A549 (cell line): ENCODE measurements at regions of chr2 and their contacts with region 1.

Region 1: DNA sequence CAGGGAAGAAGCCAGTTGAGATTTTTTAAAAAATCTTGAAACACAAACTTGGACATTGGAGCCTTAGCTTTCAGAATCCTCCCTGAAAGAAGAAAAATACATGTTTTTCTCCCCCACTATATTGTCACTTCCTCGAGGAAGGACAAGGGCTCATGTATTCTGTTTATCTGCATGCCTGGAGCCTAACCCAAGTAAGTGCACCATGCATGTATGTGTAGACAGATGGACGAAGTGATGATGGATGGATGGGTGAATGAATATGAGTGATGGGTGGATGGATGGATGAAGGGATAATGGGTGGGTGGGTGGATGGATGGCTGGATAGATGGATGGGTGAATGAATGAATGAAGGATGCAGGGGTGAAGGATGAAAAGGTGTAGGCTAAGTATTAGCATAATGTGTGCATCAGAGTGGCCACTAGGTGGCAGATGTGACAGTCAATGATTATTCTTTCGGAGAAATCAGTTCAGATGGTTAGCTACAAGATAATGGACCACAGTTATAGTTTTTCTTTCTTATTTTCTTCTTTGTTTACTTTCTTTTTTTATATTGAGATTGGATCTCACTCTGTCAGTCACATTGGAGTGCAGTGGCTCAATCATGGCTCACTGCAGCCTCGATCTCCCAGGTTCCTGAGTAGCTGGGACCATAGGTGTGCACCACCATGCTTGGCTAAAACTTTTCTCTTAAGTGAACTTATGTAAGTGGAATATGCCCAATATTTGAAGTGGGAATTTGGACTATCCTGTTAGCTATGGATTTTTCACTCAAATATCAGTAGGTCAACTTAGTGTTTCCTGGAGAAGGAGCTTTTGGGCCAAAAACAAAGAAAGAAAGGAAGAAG is 18.5 kb upstream of the CCDC93 start:
- DNase-seq: peak; percentile 29 to 34
- ATAC-seq: peak; percentile 85 to 92
- H3K4me3 ChIP-seq: no peak overlapping the region
- H3K27ac ChIP-seq: no peak overlapping the region
- H3K4me1 ChIP-seq: no peaks in the 10 kb centered on the region
- CTCF ChIP-seq: peak; percentile 71
- EP300 ChIP-seq: no peak
- POLR2A ChIP-seq: no peak
- RAD21 ChIP-seq: peak; percentile 51

Region 2: GRCh38 chr2:117943013-117943672 is 89.2 kb before region 1 on chr2:
- CTCF ChIA-PET with region 1: no interaction called
- POLR2A ChIA-PET with region 1: no interaction called
- DNase-seq: no peak
- ATAC-seq: no peak
- H3K4me3 ChIP-seq: no peak overlapping the region
- H3K27ac ChIP-seq: no peak overlapping the region
- H3K4me1 ChIP-seq: 0 out of 3 replicates have a peak, but pooled peaks cover 5% of the 10 kb centered on the region
- CTCF ChIP-seq: no peak
- EP300 ChIP-seq: no peak
- POLR2A ChIP-seq: no peak
- RAD21 ChIP-seq: no peak

Region 3: GRCh38 chr2:118046634-118047210 is 14.3 kb after region 1 on chr2:
- CTCF ChIA-PET with region 1: interaction called, 19 read pairs
- POLR2A ChIA-PET with region 1: no interaction called
- DNase-seq: peak; percentile 18 to 48
- ATAC-seq: peak; percentile 63 to 71; a peak in 3 of 6 replicates
- H3K4me3 ChIP-seq: peak overlapping the region; percentile 31; the same call in 1 of the 3 replicates
- H3K27ac ChIP-seq: no peak overlapping the region
- H3K4me1 ChIP-seq: peaks cover 19% of the 10 kb centered on the region; the same call in 2 of the 3 replicates
- CTCF ChIP-seq: peak; percentile 80
- EP300 ChIP-seq: no peak
- POLR2A ChIP-seq: no peak
- RAD21 ChIP-seq: peak; percentile 80 to 83

Region 4: DNA sequence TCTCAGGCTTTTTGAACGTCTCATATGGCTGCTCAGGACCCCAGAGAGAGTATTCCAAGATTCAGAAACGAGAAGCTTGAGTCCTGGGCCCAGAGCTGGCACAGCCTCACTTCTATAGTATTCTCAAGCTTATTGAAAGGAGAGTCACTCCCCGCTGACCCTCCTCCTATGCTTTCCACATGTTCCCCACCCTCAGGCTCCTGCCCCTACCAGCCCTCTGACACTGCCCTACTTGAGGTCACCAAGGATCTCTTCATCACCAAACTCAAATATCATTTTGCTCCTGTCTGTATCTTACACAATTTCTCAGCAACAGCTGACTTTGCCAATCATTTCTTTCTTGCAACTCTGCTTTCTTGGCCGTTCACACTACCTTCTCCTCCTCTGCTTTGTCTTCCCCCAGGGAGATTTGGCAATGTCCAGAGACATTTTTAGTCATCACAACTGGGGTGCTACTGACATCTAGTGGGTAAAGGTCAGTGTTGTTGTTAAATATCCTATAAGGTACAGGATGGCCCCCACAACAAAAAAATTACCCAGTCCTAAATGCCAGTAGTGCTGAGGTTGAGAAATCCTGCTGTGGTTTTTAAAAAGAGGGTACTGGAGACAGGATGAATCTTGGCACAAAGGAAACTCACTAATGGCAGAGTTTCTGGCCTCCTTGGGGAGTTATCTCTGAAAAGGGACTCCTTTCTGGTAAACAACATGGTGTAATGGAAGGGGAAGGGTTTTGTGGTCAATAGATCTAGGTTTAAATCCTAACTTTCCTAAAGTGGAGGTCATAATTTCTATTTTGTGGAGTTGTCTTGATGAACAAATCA is 29.0 kb after region 1 on chr2:
- CTCF ChIA-PET with region 1: interaction called, 33 read pairs
- POLR2A ChIA-PET with region 1: no interaction called
- DNase-seq: peak; percentile 10 to 27
- ATAC-seq: peak; percentile 77 to 81; a peak in 5 of 6 replicates
- H3K4me3 ChIP-seq: no peak overlapping the region
- H3K27ac ChIP-seq: no peak overlapping the region
- H3K4me1 ChIP-seq: no peaks in the 10 kb centered on the region
- CTCF ChIP-seq: peak; percentile 47
- EP300 ChIP-seq: no peak
- POLR2A ChIP-seq: no peak
- RAD21 ChIP-seq: peak; percentile 46 to 53

Region 5: GRCh38 chr2:118417406-118418120 is 385.2 kb after region 1 on chr2:
- CTCF ChIA-PET with region 1: no interaction called
- POLR2A ChIA-PET with region 1: no interaction called
- DNase-seq: no peak
- ATAC-seq: no peak
- H3K4me3 ChIP-seq: no peak overlapping the region
- H3K27ac ChIP-seq: no peak overlapping the region
- H3K4me1 ChIP-seq: no peaks in the 10 kb centered on the region
- CTCF ChIP-seq: no peak
- EP300 ChIP-seq: no peak
- POLR2A ChIP-seq: no peak
- RAD21 ChIP-seq: no peak

Region 6: GRCh38 chr2:118865106-118865505 is 832.7 kb after region 1 on chr2:
- CTCF ChIA-PET with region 1: interaction called, 12 read pairs
- POLR2A ChIA-PET with region 1: no interaction called
- DNase-seq: peak; percentile 29 to 55
- ATAC-seq: peak; percentile 94 to 99
- H3K4me3 ChIP-seq: no peak overlapping the region
- H3K27ac ChIP-seq: no peak overlapping the region
- H3K4me1 ChIP-seq: peaks cover 5% of the 10 kb centered on the region; the same call in 1 of the 3 replicates
- CTCF ChIP-seq: peak; percentile 77
- EP300 ChIP-seq: no peak
- POLR2A ChIP-seq: no peak
- RAD21 ChIP-seq: peak; percentile 76 to 90